HEK293 (cell line): ENCODE measurements at regions of chr21 and their contacts with region 1.

Region 1: DNA sequence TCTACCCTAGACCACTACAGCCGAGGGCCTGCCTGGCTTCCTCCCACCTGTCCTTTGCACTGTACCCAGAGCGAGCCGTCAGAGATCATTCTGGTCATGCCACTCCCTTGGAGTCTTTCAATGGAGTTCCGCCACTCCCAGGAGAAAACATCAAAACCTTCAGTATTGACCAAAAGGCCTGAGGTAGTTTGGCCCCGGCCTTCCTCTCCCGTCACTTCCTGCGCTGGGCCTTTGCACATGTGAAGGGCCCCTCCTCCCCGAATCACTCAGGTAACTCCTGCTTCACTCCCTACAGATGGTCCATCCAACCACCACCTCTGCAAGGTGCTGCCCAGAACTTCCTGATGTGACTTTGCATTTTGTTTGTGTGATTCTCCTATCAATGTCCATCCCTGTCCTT is 26.6 kb downstream of the UBE2G2 start:
- H3K4me3 ChIP-seq: no peak overlapping the region
- H3K27ac ChIP-seq: no peak overlapping the region
- H3K4me1 ChIP-seq: no peaks in the 10 kb centered on the region
- CTCF ChIP-seq: no peak

Region 2: DNA sequence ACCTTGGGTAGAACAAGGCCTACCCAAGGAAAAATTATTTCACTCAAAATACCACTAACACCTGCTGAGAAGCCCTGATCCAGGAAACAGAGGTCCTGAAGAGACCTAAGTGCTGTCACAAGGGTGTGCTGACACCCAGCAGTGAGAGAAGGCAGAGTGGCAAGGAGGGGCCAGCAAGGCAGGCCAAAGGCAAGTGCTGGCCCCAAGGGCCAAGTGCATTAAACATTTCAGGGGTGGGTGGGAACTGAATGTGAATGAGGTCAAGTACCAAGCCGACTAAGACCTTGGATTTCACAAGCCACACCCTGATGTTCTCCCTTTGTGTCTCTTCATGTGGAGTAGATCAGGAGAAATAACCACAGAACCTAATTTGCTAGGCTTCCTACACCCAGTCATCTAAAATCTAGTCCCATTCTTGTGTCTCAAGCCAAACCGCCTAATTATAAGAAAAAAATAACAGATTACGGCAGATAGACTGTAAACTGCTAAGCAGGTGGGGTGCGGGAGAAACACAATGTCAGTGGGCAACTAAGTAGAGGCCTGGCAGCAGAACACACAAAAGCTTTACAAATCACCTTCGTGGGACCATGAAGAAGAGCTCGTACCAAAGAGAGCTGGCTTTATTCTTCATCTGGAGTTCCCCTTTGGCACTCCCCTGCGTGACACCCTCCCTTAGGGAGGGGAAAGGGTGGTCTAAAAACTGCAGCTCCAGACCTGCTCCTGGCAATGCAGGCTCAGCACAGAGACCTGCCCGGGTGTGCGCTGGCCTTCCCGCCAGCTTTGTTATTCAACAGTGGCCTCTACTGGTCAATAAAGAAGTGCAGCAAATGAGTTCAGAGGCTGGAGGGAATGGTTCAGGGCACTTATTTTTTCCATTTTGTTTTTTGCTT is 18.0 kb after region 1 on chr21:
- CTCF ChIA-PET with region 1: interaction called, 12 read pairs
- POLR2A ChIA-PET with region 1: no interaction called
- H3K4me3 ChIP-seq: no peak overlapping the region
- H3K27ac ChIP-seq: no peak overlapping the region
- H3K4me1 ChIP-seq: no peaks in the 10 kb centered on the region
- CTCF ChIP-seq: peak; percentile 44